Stomach (tissue), 19 donors: ENCODE measurements at regions of chr16 and their contacts with region 1.

Region 1: GRCh38 chr16:2919511-2920255 is 8.0 kb downstream of the FLYWCH1 start:
- DNase-seq: peak; percentile 62 to 89
- H3K4me3 ChIP-seq: no peak overlapping the region
- H3K27ac ChIP-seq: peak overlapping the region; percentile 37 to 77 (median 60)
- H3K4me1 ChIP-seq: peaks cover 0 to 12% (median 5%) of the 10 kb centered on the region in 4 donors
- H3K27me3 ChIP-seq: no peaks in the 10 kb centered on the region
- CTCF ChIP-seq: peak in 5 of 7 experiments; percentile 85 to 98 (median 93)
- EP300 ChIP-seq: no peak
- POLR2A ChIP-seq: no peak

Region 2: GRCh38 chr16:2816751-2817339 is 102.8 kb before region 1 on chr16 and contains the start of gene PRSS21:
- intact Hi-C with region 1: no loop called
- DNase-seq: no peak
- H3K4me3 ChIP-seq: peak within 1 kb of the TSS in 1 of 4 donors; percentile 3
- H3K27ac ChIP-seq: no peak within 1 kb of the TSS
- H3K4me1 ChIP-seq: peaks cover 0 to 2% (median 0%) of the 10 kb centered on the region in 4 donors
- H3K27me3 ChIP-seq: peaks cover 0 to 83% (median 3%) of the 10 kb centered on the region in 3 donors
- CTCF ChIP-seq: peak in 1 of 7 experiments; percentile 26
- EP300 ChIP-seq: no peak
- POLR2A ChIP-seq: no peak
- total RNA-seq, gene PRSS21: 1.1 TPM in 1 of 5 donors, not detected in the others

Region 3: DNA sequence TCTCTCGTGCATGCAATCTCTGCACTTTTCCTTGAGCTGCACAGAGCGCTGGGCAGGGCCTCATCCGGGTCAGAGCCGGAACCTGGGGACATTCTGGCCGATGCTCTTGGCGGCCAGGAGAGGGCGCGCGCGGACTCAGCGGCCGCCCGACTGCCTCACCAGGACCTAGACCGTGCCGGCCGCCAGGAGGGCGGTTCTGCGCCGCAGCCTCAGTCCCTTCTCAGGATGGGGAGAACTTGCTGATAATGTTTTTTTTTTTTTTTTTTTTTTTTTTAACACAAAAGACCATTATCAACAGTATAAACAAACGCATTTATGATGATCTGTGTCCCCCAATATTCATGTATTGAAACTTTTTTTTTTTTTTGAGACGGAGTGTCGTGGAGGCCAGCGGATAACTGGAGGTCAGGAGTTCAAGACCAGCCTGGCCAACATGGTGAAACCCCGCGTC is 44.7 kb before region 1 on chr16:
- intact Hi-C with region 1: loop called (anchors 5 kb)
- DNase-seq: peak; percentile 83 to 94
- H3K4me3 ChIP-seq: no peak overlapping the region
- H3K27ac ChIP-seq: no peak overlapping the region
- H3K4me1 ChIP-seq: peaks cover 4 to 14% (median 12%) of the 10 kb centered on the region in 4 donors
- H3K27me3 ChIP-seq: peaks cover 0 to 4% (median 0%) of the 10 kb centered on the region in 3 donors
- CTCF ChIP-seq: peak in 6 of 7 experiments; percentile 61 to 97 (median 92)
- EP300 ChIP-seq: no peak
- POLR2A ChIP-seq: no peak

Region 4: DNA sequence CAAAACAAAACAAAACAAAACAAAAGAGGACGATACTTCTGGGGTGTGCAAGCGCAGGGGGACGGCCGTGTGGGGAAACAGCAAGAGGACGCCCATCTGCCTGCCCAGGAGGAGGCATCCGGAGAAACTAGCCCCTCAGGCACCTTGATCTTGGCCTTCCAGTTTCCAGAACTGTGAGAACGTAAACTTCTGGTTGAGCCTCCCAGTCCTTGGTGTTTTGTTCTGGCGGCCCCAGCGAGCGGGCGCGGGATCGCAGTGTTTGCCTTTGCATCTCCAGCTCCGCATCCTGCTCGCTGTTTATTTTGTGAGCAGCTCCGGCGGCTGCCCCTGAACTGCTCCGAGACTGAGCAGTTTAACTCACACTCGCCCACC is 125.7 kb after region 1 on chr16:
- intact Hi-C with region 1: no loop called
- DNase-seq: peak in 1 of 2 donors; percentile 79
- H3K4me3 ChIP-seq: peak overlapping the region; percentile 46 to 69 (median 52)
- H3K27ac ChIP-seq: peak overlapping the region in 3 of 5 donors; percentile 29 to 73 (median 59)
- H3K4me1 ChIP-seq: peaks cover 23 to 27% (median 25%) of the 10 kb centered on the region in 4 donors
- H3K27me3 ChIP-seq: peaks cover 19 to 98% (median 77%) of the 10 kb centered on the region in 3 donors
- CTCF ChIP-seq: no peak
- EP300 ChIP-seq: no peak
- POLR2A ChIP-seq: no peak